Mammary epithelial cell (primary cell): ENCODE measurements at regions of chr2 and their contacts with region 1.

Region 1: DNA sequence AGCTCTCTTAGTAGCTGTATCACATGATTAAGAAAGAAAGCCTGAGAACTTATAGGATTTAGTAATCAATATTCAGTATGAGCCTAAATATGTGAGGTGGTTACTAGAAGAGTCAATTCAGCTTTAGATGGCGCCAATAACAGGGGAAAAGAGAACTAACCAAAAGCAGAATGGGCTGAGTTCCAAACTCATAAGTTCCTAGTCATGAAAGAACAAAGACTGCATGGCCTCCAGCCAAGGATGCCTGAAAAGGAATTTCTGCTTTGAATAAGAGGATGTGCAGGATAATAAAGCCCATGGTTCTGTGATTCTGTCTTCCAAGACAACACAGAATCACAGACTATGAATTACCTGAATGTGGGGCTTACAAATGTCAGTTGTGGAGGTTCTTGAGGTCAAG is 196.5 kb downstream of the SATB2 start:
- DNase-seq: peak; percentile 77
- H3K4me3 ChIP-seq: no peak overlapping the region
- H3K27ac ChIP-seq: no peak overlapping the region
- H3K4me1 ChIP-seq: no peaks in the 10 kb centered on the region
- H3K27me3 ChIP-seq: no peaks in the 10 kb centered on the region
- CTCF ChIP-seq: peak in 1 of 2 donors; percentile 34

Region 2: GRCh38 chr2:198309673-198310280 is 951.5 kb before region 1 on chr2:
- CTCF ChIA-PET with region 1: no interaction called
- dilution Hi-C with region 1: no loop called
- in situ Hi-C with region 1: no loop called
- intact Hi-C with region 1: loop called (anchors 1 kb)
- DNase-seq: peak; percentile 27
- H3K4me3 ChIP-seq: no peak overlapping the region
- H3K27ac ChIP-seq: no peak overlapping the region
- H3K4me1 ChIP-seq: peaks cover 4% of the 10 kb centered on the region
- H3K27me3 ChIP-seq: peaks cover 1% of the 10 kb centered on the region
- CTCF ChIP-seq: peak; percentile 86 to 89

Region 3: DNA sequence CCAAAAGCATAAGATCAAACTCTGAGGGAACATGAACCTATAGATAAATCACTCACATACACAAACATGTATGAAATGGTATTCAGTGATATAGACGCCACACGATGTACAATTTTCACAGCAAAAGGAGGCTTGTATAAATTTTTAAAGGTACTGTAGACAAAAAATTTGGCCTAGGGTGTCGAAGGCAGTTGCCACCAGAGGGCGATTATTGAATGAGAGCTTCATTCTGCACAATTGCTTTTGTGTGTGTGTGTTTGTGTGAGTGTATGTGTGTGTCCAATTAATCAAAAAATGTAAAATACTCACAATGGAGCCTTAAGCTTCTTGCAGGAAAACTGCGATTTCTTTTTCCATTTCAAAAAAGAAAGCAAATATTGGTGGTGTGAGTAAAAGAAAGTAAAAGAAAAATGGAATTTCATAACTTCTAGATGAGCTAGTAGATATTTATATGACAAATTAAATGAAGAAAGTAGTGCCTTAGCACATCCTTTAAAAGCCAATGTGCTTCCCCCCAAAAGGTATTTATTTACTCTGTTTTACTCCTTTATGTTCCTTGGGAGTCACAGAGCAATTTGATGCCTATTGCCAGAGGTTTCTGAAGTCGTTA is 603.6 kb before region 1 on chr2:
- CTCF ChIA-PET with region 1: no interaction called
- dilution Hi-C with region 1: no loop called
- in situ Hi-C with region 1: no loop called
- intact Hi-C with region 1: loop called (anchors 5 kb)
- DNase-seq: peak; percentile 8
- H3K4me3 ChIP-seq: no peak overlapping the region
- H3K27ac ChIP-seq: no peak overlapping the region
- H3K4me1 ChIP-seq: no peaks in the 10 kb centered on the region
- H3K27me3 ChIP-seq: peaks cover 4% of the 10 kb centered on the region
- CTCF ChIP-seq: peak; percentile 37 to 61

Region 4: DNA sequence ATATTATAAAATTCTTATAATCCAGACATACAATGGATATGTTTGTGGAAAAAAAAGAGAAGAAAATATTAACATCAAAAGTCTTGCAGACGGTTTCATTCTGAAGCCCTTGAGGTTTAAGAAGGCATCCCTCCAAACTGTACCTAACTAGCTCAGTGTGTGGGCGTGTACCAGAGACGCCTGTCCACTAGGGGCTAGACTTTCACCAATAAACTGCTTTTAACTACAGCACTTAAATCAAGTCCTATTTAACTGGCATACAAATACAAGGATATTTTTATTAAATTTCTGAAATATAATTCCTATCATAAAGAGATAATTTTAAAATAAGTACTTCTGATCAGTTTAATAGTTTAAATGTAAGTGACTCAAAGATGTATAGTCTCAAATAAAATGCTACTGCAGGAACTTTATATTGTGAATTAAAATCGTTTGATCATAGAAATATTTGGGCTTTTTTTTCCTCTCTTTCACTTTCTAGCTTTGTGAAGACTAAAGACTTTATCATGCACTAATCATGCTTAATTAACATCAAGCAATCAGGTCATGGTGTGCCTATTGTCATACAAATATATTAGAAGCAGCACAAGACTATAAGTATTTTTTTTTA is 241.2 kb before region 1 on chr2:
- CTCF ChIA-PET with region 1: no interaction called
- dilution Hi-C with region 1: no loop called
- in situ Hi-C with region 1: no loop called
- intact Hi-C with region 1: loop called (anchors 10 kb)
- DNase-seq: peak; percentile 7
- H3K4me3 ChIP-seq: no peak overlapping the region
- H3K27ac ChIP-seq: no peak overlapping the region
- H3K4me1 ChIP-seq: no peaks in the 10 kb centered on the region
- H3K27me3 ChIP-seq: no peaks in the 10 kb centered on the region
- CTCF ChIP-seq: peak; percentile 51 to 59

Region 5: GRCh38 chr2:199488772-199489400 is 227.6 kb after region 1 on chr2:
- CTCF ChIA-PET with region 1: no interaction called
- dilution Hi-C with region 1: no loop called
- in situ Hi-C with region 1: no loop called
- intact Hi-C with region 1: loop called (anchors 1 kb)
- DNase-seq: peak; percentile 43
- H3K4me3 ChIP-seq: no peak overlapping the region
- H3K27ac ChIP-seq: no peak overlapping the region
- H3K4me1 ChIP-seq: no peaks in the 10 kb centered on the region
- H3K27me3 ChIP-seq: no peaks in the 10 kb centered on the region
- CTCF ChIP-seq: peak; percentile 73 to 89